ENCODE measurements at regions of chr3 and their contacts with region 1.

Region 1: GRCh38 chr3:101827211-101828174 is 21.8 kb upstream of the NFKBIZ start:
- DNase-seq: peak; percentile 52 to 86 (median 73)
- ATAC-seq: peak; percentile 86
- H3K4me3 ChIP-seq: peak overlapping the region; percentile 66
- H3K4me3 Mint-ChIP-seq: peak overlapping the region; percentile 85 to 97 (median 95)
- H3K27ac ChIP-seq: peak overlapping the region; percentile 88
- H3K27ac Mint-ChIP-seq: peak overlapping the region; percentile 94 to 99 (median 97)
- H3K4me1 ChIP-seq: peaks cover 13 to 28% of the 10 kb centered on the region in 2 donors
- H3K4me1 Mint-ChIP-seq: peaks cover 31 to 76% (median 63%) of the 10 kb centered on the region in 7 donors
- H3K27me3 ChIP-seq: no peaks in the 10 kb centered on the region
- H3K27me3 Mint-ChIP-seq: no peaks in the 10 kb centered on the region

Region 2: DNA sequence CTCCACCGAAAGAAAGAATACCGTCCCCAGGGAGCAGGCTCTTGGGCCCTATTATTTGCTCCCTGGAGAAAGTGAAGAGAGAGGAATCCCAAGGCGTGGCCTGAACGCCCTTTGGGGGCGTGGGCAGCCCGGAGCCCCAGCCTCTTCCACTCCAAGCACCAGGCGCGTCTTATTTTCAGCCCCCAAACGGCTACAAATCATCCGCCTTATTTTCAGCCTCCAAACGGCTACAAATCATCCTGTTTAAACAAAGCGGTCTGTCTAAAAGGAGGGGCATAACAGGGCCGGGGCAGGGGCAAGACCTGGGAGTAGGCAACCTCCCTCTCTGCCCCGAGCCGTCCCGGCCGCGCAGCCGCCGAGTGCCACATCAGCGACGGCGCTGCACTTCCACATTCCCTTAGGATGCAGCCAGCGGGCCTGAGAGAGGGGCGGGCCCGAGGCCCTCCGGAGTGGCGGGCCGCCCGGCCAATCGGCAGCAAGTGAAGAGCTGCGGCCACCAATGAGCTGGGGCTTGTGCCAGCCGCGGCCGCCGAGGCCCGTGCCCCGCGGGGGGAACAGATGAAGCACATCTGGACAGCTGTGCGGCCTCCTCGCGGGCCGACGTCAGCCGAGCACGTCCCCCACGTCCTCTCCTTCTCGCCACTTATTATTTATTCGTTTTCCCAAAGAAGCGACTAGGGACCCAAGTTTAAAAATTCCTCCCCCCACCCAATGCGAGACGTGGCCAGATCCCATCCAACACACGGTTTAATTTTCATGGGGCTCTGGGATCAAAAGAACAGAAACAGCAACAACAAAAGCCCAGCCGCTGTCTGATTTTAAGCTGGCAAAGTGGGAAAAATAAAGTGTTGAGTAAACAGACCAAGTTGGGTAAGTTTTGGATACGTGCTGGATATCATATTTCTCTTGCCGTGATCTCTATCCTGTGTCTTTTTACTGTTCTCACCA is 1335.2 kb before region 1 on chr3 and contains the start of gene TMEM45A:
- CTCF ChIA-PET with region 1: no interaction called
- POLR2A ChIA-PET with region 1: no interaction called
- intact Hi-C with region 1: loop called in 1 of 2 experiments (anchors 5 kb)
- DNase-seq: peak; percentile 20 to 85 (median 69)
- ATAC-seq: peak; percentile 97
- H3K4me3 ChIP-seq: peak within 1 kb of the TSS; percentile 64
- H3K4me3 Mint-ChIP-seq: peak within 1 kb of the TSS; percentile 76 to 91 (median 85)
- H3K27ac ChIP-seq: no peak within 1 kb of the TSS
- H3K27ac Mint-ChIP-seq: peak within 1 kb of the TSS in 3 of 9 donors; percentile 22 to 51 (median 49)
- H3K4me1 ChIP-seq: peaks cover 6% of the 10 kb centered on the region in 2 donors
- H3K4me1 Mint-ChIP-seq: peaks cover 5 to 14% (median 9%) of the 10 kb centered on the region in 7 donors
- H3K27me3 ChIP-seq: no peaks in the 10 kb centered on the region
- H3K27me3 Mint-ChIP-seq: peaks cover 6 to 42% (median 17%) of the 10 kb centered on the region in 5 donors
- total RNA-seq, gene TMEM45A: 0.11 to 0.44 (median 0.21) TPM

Region 3: DNA sequence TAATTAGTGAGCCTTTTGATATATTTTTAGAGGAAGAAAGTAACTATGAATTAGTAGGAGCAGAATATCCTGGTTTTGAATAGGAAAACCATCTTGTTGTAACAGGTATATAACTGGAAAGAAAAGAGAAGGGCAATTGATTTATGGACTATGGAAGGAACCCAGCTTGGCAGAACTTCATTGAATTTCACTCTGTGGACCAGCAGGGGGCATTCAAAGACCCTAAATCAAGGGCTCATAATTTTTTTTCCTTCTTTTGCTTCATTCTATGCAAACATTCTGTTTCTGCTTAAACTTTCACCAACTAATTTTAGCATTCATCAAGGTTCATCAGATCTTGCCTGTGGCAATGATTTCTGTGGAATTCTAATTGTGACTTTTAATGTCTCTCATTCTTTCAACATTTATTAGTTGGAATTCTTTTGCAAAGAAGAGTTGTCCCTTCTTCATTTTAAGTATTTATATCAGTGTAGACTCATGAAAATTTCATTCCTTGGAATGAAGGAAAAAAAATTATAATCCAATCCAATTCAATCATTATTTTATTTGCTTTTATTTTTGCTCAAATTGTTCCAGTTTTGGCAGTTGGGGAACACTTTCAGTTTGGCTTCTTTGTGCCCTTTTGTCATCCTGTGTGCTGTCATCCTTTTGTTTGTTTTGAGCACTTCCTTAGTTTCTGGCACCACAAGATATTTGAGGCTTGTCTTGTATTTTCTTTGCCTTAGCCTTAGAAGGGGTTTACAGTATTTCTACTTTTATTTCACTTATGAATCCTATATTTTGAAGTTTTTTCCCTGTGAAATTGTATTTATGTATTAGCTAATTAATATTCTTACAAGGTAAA is 18.1 kb before region 1 on chr3:
- CTCF ChIA-PET with region 1: interaction called, 6 read pairs
- POLR2A ChIA-PET with region 1: no interaction called
- intact Hi-C with region 1: loop called in 1 of 2 experiments (anchors 1 kb)
- DNase-seq: peak in 7 of 9 donors; percentile 31 to 67 (median 57)
- ATAC-seq: peak; percentile 88
- H3K4me3 ChIP-seq: no peak overlapping the region
- H3K4me3 Mint-ChIP-seq: peak overlapping the region in 8 of 10 donors; percentile 23 to 66 (median 60)
- H3K27ac ChIP-seq: peak overlapping the region; percentile 34
- H3K27ac Mint-ChIP-seq: peak overlapping the region; percentile 51 to 93 (median 87)
- H3K4me1 ChIP-seq: peaks cover 0 to 27% of the 10 kb centered on the region in 2 donors
- H3K4me1 Mint-ChIP-seq: peaks cover 11 to 62% (median 54%) of the 10 kb centered on the region in 7 donors
- H3K27me3 ChIP-seq: no peaks in the 10 kb centered on the region
- H3K27me3 Mint-ChIP-seq: no peaks in the 10 kb centered on the region

Region 4: GRCh38 chr3:101842245-101842934 is 14.9 kb after region 1 on chr3:
- CTCF ChIA-PET with region 1: interaction called, 4 read pairs
- POLR2A ChIA-PET with region 1: interaction called, 19 read pairs
- intact Hi-C with region 1: loop called in 1 of 2 experiments (anchors 1 kb)
- DNase-seq: no peak
- ATAC-seq: no peak
- H3K4me3 ChIP-seq: no peak overlapping the region
- H3K4me3 Mint-ChIP-seq: no peak overlapping the region
- H3K27ac ChIP-seq: no peak overlapping the region
- H3K27ac Mint-ChIP-seq: peak overlapping the region in 2 of 9 donors; percentile 25 to 51
- H3K4me1 ChIP-seq: no peaks in the 10 kb centered on the region
- H3K4me1 Mint-ChIP-seq: peaks cover 4 to 20% (median 10%) of the 10 kb centered on the region in 7 donors
- H3K27me3 ChIP-seq: no peaks in the 10 kb centered on the region
- H3K27me3 Mint-ChIP-seq: no peaks in the 10 kb centered on the region

Region 5: DNA sequence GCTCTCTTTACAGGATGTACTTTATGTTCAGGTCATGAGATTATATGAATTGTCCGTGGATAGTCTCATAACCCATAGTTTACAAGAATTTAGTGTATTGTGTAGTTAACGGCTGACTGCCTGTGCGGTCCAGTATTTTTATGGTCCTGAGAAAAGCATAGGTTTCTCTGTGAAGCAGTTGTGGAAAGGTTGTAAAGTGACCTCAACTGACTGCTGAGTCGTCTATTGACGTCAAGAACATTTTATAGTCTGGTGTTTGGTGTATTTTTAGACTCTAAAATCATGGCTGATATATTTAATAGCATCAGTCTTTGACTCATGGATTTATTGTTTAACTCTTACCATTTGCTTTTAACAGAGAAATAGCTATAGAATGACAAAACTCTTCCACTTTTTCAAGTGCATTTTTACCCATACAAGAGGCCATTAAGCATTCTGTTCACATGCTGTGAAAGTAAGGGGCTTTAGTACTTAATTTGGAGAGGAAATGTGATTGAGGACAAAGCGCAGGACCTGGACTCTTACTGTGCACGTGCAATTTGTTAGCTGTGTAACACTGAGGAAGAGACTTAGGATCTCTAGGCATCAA is 262.5 kb after region 1 on chr3:
- CTCF ChIA-PET with region 1: no interaction called
- POLR2A ChIA-PET with region 1: no interaction called
- intact Hi-C with region 1: loop called in 1 of 2 experiments (anchors 5 kb)
- DNase-seq: no peak
- ATAC-seq: no peak
- H3K4me3 ChIP-seq: no peak overlapping the region
- H3K4me3 Mint-ChIP-seq: no peak overlapping the region
- H3K27ac ChIP-seq: no peak overlapping the region
- H3K27ac Mint-ChIP-seq: no peak overlapping the region
- H3K4me1 ChIP-seq: peaks cover 0 to 13% of the 10 kb centered on the region in 2 donors
- H3K4me1 Mint-ChIP-seq: peaks cover 12 to 51% (median 30%) of the 10 kb centered on the region in 7 donors
- H3K27me3 ChIP-seq: no peaks in the 10 kb centered on the region
- H3K27me3 Mint-ChIP-seq: peaks cover 0 to 5% (median 0%) of the 10 kb centered on the region in 5 donors

Region 6: DNA sequence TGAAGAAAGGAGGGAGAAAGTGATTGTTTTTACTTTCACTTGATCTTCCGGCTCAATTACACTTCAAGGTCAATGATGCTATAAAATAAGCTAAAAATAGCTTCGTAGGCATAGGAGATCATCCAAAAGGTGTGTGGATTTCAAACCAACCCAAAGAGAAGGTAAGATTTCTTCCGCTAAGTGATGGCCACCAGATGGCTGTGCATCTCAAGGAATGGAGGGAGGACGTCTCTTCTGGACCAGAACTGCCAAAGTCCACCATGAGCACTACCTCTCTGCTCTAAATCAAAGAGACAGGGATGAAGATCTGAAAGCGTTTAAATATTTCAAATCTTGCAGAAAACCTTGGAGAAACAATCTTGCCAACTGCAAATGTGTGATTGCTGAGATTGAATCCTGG is 408.2 kb after region 1 on chr3:
- CTCF ChIA-PET with region 1: no interaction called
- POLR2A ChIA-PET with region 1: no interaction called
- intact Hi-C with region 1: no loop called
- DNase-seq: peak in 2 of 9 donors; percentile 24 to 25
- ATAC-seq: no peak
- H3K4me3 ChIP-seq: no peak overlapping the region
- H3K4me3 Mint-ChIP-seq: no peak overlapping the region
- H3K27ac ChIP-seq: no peak overlapping the region
- H3K27ac Mint-ChIP-seq: no peak overlapping the region
- H3K4me1 ChIP-seq: no peaks in the 10 kb centered on the region
- H3K4me1 Mint-ChIP-seq: peaks cover 0 to 1% (median 0%) of the 10 kb centered on the region in 7 donors
- H3K27me3 ChIP-seq: no peaks in the 10 kb centered on the region
- H3K27me3 Mint-ChIP-seq: peaks cover 0 to 42% (median 3%) of the 10 kb centered on the region in 5 donors